Activated naive CD8-positive, alpha-beta T cell treated with anti-CD3 and anti-CD28 coated beads, Interleukin-2, amount 10 ng/mL, durations not matched to agents 7 days and 5 days (primary cell): ENCODE measurements at regions of chr20 and their contacts with region 1.

Region 1: GRCh38 chr20:33443512-33444239 is at the start of gene SNTA1:
- DNase-seq: peak; percentile 90
- ATAC-seq: peak; percentile 89
- H3K4me3 Mint-ChIP-seq: peak within 1 kb of the TSS; percentile 91
- H3K27ac Mint-ChIP-seq: peak within 1 kb of the TSS; percentile 92
- H3K4me1 Mint-ChIP-seq: peaks cover 21% of the 10 kb centered on the region
- H3K27me3 Mint-ChIP-seq: peaks cover 7% of the 10 kb centered on the region
- total RNA-seq, gene SNTA1: 10.1 to 10.6 TPM

Region 2: GRCh38 chr20:33250666-33251065 is 193.0 kb before region 1 on chr20:
- POLR2A ChIA-PET with region 1: no interaction called
- DNase-seq: no peak
- ATAC-seq: no peak
- H3K4me3 Mint-ChIP-seq: no peak overlapping the region
- H3K27ac Mint-ChIP-seq: no peak overlapping the region
- H3K4me1 Mint-ChIP-seq: no peaks in the 10 kb centered on the region
- H3K27me3 Mint-ChIP-seq: peaks cover 16% of the 10 kb centered on the region

Region 3: GRCh38 chr20:33348131-33348855 is 95.4 kb before region 1 on chr20:
- POLR2A ChIA-PET with region 1: no interaction called
- DNase-seq: no peak
- ATAC-seq: no peak
- H3K4me3 Mint-ChIP-seq: no peak overlapping the region
- H3K27ac Mint-ChIP-seq: no peak overlapping the region
- H3K4me1 Mint-ChIP-seq: no peaks in the 10 kb centered on the region
- H3K27me3 Mint-ChIP-seq: no peaks in the 10 kb centered on the region

Region 4: DNA sequence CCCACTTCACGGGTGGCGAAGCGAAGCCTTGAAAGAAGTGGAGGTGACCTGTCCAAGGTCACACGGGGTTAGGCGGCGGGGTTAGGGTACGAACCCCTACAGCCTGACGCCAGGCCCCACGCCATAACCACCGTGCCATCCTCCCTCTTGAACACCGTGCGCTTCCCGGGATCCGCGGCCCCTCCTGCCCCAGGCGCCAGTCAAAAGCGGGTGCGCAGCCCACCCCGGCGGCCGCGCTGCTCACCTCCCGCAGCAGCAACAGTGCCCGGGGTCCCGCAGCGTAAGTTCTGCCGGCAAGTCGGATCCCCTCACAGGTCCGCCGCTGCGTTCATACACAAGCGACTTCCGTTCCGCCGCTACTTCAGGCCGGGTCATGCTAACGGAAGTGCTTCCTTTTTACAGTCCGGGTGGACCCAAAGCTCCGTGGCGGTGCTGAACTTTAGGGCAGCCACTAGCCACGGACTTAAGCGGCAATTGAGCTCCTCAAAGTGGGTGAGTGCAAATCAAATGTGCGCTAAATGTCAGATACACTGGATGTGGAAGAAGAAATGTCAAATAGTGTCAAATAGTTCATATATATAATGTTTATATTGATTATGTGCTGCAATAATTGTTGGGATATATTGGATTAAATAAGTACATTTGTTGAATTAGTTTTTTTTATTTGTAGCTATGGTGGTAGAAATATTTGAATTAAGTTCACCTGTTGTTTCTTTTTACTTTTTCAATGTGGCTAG is 42.3 kb before region 1 on chr20 and contains the start of gene CDK5RAP1:
- POLR2A ChIA-PET with region 1: interaction called, 34 read pairs
- DNase-seq: peak; percentile 82
- ATAC-seq: peak; percentile 95
- H3K4me3 Mint-ChIP-seq: peak within 1 kb of the TSS; percentile 92
- H3K27ac Mint-ChIP-seq: peak within 1 kb of the TSS; percentile 90
- H3K4me1 Mint-ChIP-seq: peaks cover 22% of the 10 kb centered on the region
- H3K27me3 Mint-ChIP-seq: no peaks in the 10 kb centered on the region
- total RNA-seq, gene CDK5RAP1: 40.0 to 41.5 TPM

Region 5: DNA sequence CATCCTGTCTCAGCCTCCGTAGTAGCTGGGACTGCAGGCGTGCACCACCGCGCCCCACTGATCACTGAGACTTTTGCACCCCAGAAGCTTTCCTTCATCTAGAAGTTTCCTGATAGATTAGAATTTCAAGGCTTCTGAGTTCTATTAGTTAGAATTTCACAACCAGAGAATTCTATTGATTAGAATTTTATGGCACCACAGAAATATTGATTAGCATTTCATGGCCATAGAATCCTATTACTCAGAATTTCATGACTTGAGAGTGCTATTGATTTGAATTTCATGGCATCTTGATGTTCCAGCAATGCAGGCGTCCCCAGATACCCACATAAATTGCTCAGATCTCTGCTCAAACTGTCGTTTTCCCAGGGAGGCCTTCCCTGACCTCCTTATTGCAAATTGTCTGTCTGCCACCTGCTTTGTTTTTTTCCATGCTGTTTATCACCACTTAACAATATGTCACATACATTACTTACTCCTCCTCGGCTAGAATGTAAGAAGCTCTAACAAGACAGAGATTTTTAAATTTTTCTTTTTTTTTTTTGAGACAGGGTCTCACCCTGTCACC is 29.3 kb after region 1 on chr20:
- POLR2A ChIA-PET with region 1: no interaction called
- DNase-seq: no peak
- ATAC-seq: no peak
- H3K4me3 Mint-ChIP-seq: no peak overlapping the region
- H3K27ac Mint-ChIP-seq: no peak overlapping the region
- H3K4me1 Mint-ChIP-seq: no peaks in the 10 kb centered on the region
- H3K27me3 Mint-ChIP-seq: no peaks in the 10 kb centered on the region

Region 6: GRCh38 chr20:33489495-33490022 is 45.9 kb after region 1 on chr20:
- POLR2A ChIA-PET with region 1: interaction called, 17 read pairs
- DNase-seq: peak; percentile 99
- ATAC-seq: peak; percentile 94
- H3K4me3 Mint-ChIP-seq: peak overlapping the region; percentile 89
- H3K27ac Mint-ChIP-seq: peak overlapping the region; percentile 91
- H3K4me1 Mint-ChIP-seq: peaks cover 5% of the 10 kb centered on the region
- H3K27me3 Mint-ChIP-seq: no peaks in the 10 kb centered on the region